ENCODE measurements at regions of chr12 and their contacts with region 1.

Region 1: DNA sequence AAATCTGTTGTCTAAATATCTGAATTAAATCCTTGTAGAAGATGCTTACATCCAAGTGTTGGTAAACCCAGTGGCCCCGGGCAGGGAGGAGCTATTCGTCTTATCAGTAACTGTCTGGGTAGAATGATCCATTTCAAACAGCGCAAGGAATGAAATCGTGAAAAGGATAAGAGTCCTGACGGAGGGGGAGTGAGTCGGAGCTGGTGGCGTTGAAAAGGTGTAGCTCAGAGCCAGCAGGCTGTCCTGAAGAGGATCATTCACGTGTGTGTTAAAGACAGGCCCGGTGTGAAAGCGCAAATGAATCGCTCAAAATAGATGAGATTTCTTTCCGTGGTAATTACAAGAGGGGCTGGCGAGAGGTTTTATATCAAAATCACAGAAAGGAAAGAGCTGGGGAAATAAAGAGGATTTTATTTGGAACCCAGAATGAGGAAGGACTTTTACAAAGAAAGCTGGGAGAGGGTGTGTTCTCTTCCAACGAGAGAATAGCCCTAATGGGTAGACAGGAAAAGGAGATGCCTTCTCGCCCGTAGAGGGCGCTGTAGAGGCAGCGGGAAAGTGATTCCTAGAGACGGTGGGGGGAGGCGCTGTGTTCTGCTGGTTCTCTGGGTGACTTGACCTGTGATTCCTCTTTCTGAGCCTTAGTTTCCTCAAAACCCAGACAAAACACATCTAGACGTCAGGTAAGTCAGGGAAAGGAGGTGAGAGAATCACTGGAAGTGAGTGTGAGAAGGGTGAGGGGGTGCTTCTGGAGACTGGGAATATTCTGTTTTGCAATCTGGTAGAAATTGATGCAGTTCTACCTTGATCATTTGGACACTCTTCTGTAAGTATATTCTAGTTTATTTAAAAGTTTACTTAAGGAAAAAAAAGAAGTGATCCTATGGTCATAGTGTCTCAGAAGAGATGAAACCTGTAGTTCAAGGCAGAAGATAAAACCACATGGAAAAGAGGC is 39.3 kb downstream of the SRRM4 start:
- DNase-seq: peak; percentile 43
- H3K4me3 Mint-ChIP-seq: no peak overlapping the region
- H3K27ac Mint-ChIP-seq: no peak overlapping the region
- H3K4me1 Mint-ChIP-seq: no peaks in the 10 kb centered on the region
- H3K27me3 Mint-ChIP-seq: peaks cover 46% of the 10 kb centered on the region
- CTCF ChIP-seq: peak; percentile 23

Region 2: DNA sequence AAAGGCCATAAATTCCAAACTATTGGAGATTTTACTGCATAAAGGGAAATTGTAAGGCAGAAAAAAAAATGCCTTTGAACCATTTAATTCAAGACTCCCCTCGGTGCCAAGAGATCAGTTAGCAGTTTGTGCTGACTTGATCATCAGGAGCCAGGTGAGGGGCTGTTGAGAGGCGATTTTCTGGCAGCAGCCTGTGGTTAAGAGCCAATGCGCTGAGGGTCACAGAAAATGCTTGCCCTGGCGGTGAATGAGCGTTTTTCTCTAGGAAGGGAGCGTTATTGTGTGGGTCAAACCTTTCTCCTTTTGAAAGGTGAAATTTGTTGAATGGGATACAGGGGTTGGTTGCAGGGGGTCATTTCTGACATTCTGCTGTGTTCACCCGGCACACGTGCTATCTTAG is 34.6 kb before region 1 on chr12:
- CTCF ChIA-PET with region 1: no interaction called
- intact Hi-C with region 1: no loop called
- DNase-seq: no peak
- H3K4me3 Mint-ChIP-seq: no peak overlapping the region
- H3K27ac Mint-ChIP-seq: no peak overlapping the region
- H3K4me1 Mint-ChIP-seq: no peaks in the 10 kb centered on the region
- H3K27me3 Mint-ChIP-seq: peaks cover 74% of the 10 kb centered on the region
- CTCF ChIP-seq: no peak

Region 3: GRCh38 chr12:119008691-119009221 is 11.9 kb before region 1 on chr12:
- CTCF ChIA-PET with region 1: no interaction called
- intact Hi-C with region 1: no loop called
- DNase-seq: no peak
- H3K4me3 Mint-ChIP-seq: no peak overlapping the region
- H3K27ac Mint-ChIP-seq: no peak overlapping the region
- H3K4me1 Mint-ChIP-seq: no peaks in the 10 kb centered on the region
- H3K27me3 Mint-ChIP-seq: peaks cover 16% of the 10 kb centered on the region
- CTCF ChIP-seq: no peak

Region 4: DNA sequence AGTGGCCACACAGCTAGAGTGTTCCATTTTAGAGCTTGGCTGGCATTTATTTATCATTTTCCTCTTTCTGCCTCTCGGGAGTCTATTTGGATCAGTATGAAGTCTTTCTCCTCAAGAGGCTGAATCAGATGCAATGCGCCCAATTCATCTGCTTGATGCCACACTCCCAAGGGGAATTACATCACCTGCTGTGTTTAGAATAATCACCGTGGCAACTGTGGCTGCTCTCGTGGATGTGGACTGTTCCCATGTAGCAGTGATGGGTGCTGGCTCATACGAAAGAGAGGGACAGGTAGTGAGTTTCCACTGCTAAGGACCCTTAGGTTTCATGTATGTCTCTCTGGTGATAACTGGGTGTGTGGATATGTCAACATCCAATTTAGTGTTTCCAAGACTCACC is 31.3 kb after region 1 on chr12:
- CTCF ChIA-PET with region 1: no interaction called
- intact Hi-C with region 1: no loop called
- DNase-seq: no peak
- H3K4me3 Mint-ChIP-seq: no peak overlapping the region
- H3K27ac Mint-ChIP-seq: no peak overlapping the region
- H3K4me1 Mint-ChIP-seq: no peaks in the 10 kb centered on the region
- H3K27me3 Mint-ChIP-seq: no peaks in the 10 kb centered on the region
- CTCF ChIP-seq: no peak

Region 5: DNA sequence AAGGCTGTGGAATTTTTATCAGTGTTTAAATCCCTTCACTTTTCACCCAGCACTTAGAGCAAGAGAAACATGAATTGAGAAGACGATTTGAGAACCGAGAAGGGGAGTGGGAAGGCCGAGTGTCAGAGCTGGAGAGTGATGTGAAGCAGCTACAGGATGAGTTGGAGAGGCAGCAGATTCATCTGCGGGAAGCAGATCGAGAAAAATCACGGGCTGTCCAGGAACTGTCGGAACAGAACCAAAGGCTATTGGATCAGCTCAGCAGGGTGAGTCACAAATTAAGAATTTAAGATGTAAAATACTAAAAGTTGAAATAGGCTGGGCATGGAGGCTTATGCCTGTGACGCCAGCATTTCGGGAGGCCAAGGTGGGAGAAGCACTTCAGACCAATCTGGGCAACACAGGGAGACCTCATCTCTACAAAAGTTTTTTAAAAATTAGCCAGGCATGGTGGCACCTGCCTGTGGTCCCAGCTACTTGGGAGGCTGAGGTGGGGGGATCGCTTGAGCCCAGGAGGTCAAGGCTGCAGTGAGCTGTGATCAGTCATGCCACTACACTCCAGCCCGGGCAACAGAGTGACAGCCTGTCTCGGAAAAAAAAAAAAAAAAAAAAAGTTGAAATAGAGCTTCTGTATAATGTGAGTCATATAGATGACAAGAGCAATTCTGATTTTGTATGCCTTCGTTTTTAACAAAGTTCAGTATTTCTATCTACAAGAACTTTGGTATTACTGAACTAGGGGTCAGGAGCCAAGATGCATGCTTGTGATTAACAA is 978.0 kb after region 1 on chr12:
- CTCF ChIA-PET with region 1: interaction called, 11 read pairs
- intact Hi-C with region 1: no loop called
- DNase-seq: no peak
- H3K4me3 Mint-ChIP-seq: no peak overlapping the region
- H3K27ac Mint-ChIP-seq: no peak overlapping the region
- H3K4me1 Mint-ChIP-seq: no peaks in the 10 kb centered on the region
- H3K27me3 Mint-ChIP-seq: no peaks in the 10 kb centered on the region
- CTCF ChIP-seq: no peak